Posterior cingulate gyrus (tissue), 11 donors: ENCODE measurements at regions of chrX and their contacts with region 1.

Region 1: GRCh38 chrX:32825009-32825408 is 386.3 kb downstream of the DMD start:
- DNase-seq: no peak

Region 2: GRCh38 chrX:31962256-31962655 is 862.8 kb before region 1 on chrX:
- intact Hi-C with region 1: no loop called
- DNase-seq: no peak

Region 3: DNA sequence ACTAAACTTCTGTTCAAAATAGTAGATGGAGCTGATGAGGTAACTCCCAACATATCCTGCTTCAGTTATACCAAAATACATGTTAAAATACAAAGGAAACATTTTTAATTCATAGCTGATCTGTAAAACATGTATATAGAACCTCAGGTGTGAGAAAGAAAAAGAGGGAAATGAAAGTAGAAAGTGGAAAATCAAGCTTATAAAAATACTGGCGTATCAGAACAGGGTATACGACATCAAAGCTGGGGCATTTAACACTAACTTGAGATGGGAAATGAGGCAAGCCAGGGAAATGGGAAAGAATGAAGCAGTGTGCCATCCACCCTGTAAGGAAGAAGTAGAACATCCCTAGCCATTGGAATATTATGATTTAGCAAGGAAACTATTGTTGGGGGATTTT is 381.2 kb before region 1 on chrX:
- intact Hi-C with region 1: loop called (anchors 5 kb)
- DNase-seq: no peak